Sigmoid colon (tissue), 7 donors: ENCODE measurements at regions of chr18 and their contacts with region 1.

Region 1: GRCh38 chr18:26383454-26384270 is 157.4 kb downstream of the TAF4B start:
- DNase-seq: no peak
- H3K4me3 ChIP-seq: no peak overlapping the region
- H3K27ac ChIP-seq: no peak overlapping the region
- H3K4me1 ChIP-seq: no peaks in the 10 kb centered on the region
- H3K27me3 ChIP-seq: no peaks in the 10 kb centered on the region
- CTCF ChIP-seq: peak in 3 of 4 experiments; percentile 52 to 75 (median 71)
- EP300 ChIP-seq: no peak
- POLR2A ChIP-seq: no peak

Region 2: GRCh38 chr18:26548429-26549262 is 165.0 kb after region 1 on chr18 and contains the start of gene KCTD1:
- intact Hi-C with region 1: loop called (anchors 10 kb)
- DNase-seq: peak; percentile 86
- H3K4me3 ChIP-seq: peak within 1 kb of the TSS; percentile 61 to 75 (median 70)
- H3K27ac ChIP-seq: peak within 1 kb of the TSS; percentile 55 to 74 (median 72)
- H3K4me1 ChIP-seq: peaks cover 0 to 56% (median 53%) of the 10 kb centered on the region in 4 donors
- H3K27me3 ChIP-seq: peaks cover 10 to 43% (median 34%) of the 10 kb centered on the region in 3 donors
- CTCF ChIP-seq: no peak
- EP300 ChIP-seq: no peak
- POLR2A ChIP-seq: no peak
- total RNA-seq, gene KCTD1: 7.1 to 22.4 (median 16.1) TPM

Region 3: GRCh38 chr18:26648509-26649192 is 265.0 kb after region 1 on chr18:
- intact Hi-C with region 1: loop called (anchors 5 kb)
- DNase-seq: no peak
- H3K4me3 ChIP-seq: no peak overlapping the region
- H3K27ac ChIP-seq: no peak overlapping the region
- H3K4me1 ChIP-seq: no peaks in the 10 kb centered on the region
- H3K27me3 ChIP-seq: no peaks in the 10 kb centered on the region
- CTCF ChIP-seq: no peak
- EP300 ChIP-seq: no peak
- POLR2A ChIP-seq: no peak